Activated CD4-positive, alpha-beta T cell treated with anti-CD3 and anti-CD28 coated beads, Interleukin-2, amount 10 ng/mL, durations not matched to agents 7 days and 5 days (primary cell): ENCODE measurements at regions of chr1 and their contacts with region 1.

Region 1: DNA sequence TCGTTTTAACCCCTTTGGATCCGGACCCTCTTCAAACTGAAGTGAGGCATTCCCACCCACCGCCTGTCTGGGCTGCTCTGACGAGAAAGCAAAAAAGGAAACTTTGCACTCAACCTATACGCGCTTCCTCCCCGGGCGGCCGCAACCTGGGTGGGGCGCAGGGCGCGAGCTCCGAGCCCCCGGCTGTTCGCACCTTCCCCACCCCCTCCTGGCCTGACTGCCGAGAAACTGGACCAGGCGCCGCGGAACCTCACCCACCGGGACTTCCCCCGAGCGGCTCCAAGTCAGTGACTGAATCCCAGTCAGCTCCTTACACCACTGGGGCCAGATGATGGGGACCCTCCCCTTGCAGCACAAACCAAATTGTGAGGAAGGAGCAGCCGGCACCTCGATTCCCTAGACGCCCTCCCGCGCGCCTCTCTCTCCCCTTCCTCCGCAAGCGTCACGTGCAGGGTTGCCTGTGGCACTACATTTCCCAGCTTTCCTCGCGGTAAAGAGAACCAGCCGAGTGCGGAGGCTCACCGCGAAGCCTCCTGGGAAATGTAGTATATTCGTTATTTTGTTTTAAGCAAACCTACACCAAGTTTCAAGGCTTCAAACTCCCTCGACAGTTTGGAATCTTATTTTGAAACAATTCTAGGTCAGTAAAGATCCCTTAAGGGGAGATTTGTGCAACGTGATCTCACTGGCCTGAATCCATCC is at the start of gene RAB29:
- DNase-seq: peak; percentile 93
- H3K4me3 Mint-ChIP-seq: peak within 1 kb of the TSS; percentile 91
- H3K27ac Mint-ChIP-seq: peak within 1 kb of the TSS; percentile 95
- H3K4me1 Mint-ChIP-seq: peaks cover 55% of the 10 kb centered on the region
- H3K27me3 Mint-ChIP-seq: no peaks in the 10 kb centered on the region
- total RNA-seq, gene RAB29: 51.7 to 54.6 TPM

Region 2: GRCh38 chr1:205791568-205792180 is 16.5 kb after region 1 on chr1:
- CTCF ChIA-PET with region 1: interaction called, 19 read pairs
- POLR2A ChIA-PET with region 1: interaction called, 3 read pairs
- DNase-seq: peak; percentile 74
- H3K4me3 Mint-ChIP-seq: no peak overlapping the region
- H3K27ac Mint-ChIP-seq: no peak overlapping the region
- H3K4me1 Mint-ChIP-seq: peaks cover 1% of the 10 kb centered on the region
- H3K27me3 Mint-ChIP-seq: no peaks in the 10 kb centered on the region

Region 3: GRCh38 chr1:205826995-205827394 is 51.8 kb after region 1 on chr1:
- CTCF ChIA-PET with region 1: no interaction called
- POLR2A ChIA-PET with region 1: no interaction called
- DNase-seq: no peak
- H3K4me3 Mint-ChIP-seq: no peak overlapping the region
- H3K27ac Mint-ChIP-seq: no peak overlapping the region
- H3K4me1 Mint-ChIP-seq: peaks cover 16% of the 10 kb centered on the region
- H3K27me3 Mint-ChIP-seq: no peaks in the 10 kb centered on the region